ENCODE measurements at regions of chr9 and their contacts with region 1.

Region 1: DNA sequence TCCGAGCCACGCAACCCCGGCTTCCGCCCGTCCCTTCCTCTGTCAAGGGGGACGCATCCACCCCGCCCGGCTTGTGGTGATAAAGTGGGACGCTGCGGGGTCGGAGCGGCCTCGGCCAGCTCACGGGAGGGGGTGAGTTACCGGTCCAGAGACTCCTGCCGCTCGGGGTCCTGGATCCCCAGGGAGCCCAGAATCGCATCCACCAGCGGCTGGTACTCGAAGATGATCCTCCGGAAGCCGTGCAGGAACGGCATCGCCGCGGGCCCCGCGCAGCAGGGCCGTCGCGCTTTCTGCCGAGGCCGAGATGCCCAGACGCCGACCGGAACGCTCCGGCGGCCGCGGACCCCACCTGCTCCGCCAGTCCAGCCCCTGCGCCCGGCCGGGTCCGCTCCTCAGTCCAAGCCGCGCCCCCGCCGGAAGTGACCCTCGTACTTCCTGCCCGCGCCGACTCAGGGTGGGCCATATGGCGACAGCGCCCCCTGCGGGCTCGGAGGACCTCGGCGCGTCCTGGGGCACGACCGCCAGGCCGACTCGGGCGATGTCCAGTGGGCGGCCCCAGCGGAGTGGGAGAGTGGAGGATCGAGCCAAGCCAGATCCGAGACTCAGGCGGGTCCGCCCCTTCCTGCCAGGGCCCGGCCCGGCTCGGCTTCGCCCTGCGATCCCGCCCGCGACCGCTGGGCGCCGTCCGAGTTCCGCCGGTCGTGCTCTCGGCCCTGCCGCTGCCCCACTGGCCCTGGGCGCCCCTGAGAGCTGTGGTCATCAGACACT is at the start of gene ASB6:
- DNase-seq: peak; percentile 78 to 94 (median 89)
- ATAC-seq: peak; percentile 71
- H3K4me3 ChIP-seq: peak within 1 kb of the TSS; percentile 98
- H3K4me3 Mint-ChIP-seq: peak within 1 kb of the TSS; percentile 87
- H3K27ac ChIP-seq: peak within 1 kb of the TSS; percentile 66 to 74
- H3K27ac Mint-ChIP-seq: peak within 1 kb of the TSS; percentile 85
- H3K4me1 ChIP-seq: peaks cover 35% of the 10 kb centered on the region
- H3K4me1 Mint-ChIP-seq: peaks cover 11% of the 10 kb centered on the region
- H3K27me3 ChIP-seq: no peaks in the 10 kb centered on the region
- H3K27me3 Mint-ChIP-seq: no peaks in the 10 kb centered on the region
- CTCF ChIP-seq: peak; percentile 100
- total RNA-seq, gene ASB6: 28.5 to 29.3 TPM

Region 2: DNA sequence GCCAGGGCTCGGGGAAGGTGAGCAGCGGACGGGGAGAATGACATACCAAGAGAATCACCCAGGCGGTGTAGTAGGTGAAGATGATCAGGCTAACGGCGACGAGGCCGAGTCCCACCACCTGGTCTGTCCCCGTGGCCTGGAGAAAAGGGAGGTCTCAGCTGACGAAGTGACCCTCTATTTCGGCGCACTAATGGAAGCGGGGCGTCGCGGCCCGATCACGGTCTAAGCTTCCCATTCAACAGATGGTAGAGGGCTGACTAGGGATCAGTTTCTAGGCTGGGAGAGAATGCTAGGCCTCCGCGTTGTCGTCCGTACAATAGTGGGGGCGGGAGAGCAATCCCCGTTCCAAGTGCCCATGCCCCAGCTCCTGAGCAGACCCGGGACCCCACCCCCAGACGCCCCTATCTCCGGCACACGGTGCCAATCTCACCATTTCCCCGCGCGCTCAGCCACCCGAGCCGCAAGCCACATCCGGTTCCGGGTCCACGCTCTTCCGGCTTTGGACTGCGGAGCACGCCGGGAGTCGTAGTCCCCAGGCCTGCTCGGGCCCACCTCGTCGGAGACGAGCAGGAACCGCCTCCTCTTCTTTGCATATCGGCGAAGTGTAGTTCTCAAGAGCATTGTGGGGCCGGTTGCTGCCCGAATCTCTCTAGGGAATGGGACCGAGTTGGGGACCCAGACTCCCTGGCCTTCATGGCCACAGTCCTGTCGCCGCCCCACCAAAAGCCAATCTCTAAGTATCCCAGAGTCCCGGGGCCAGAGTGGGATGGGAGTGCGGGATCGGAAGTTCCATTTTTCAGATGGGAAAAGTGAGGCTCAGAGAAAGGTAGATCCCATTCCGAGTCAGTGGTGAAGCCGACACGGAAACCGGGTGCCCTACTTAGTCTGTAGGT is 1704.3 kb before region 1 on chr9 and contains the start of gene DPM2:
- CTCF ChIA-PET with region 1: no interaction called
- POLR2A ChIA-PET with region 1: no interaction called
- intact Hi-C with region 1: loop called in 1 of 2 experiments (anchors 10 kb)
- DNase-seq: peak; percentile 74 to 94 (median 84)
- ATAC-seq: peak; percentile 85
- H3K4me3 ChIP-seq: peak within 1 kb of the TSS; percentile 90
- H3K4me3 Mint-ChIP-seq: peak within 1 kb of the TSS; percentile 93
- H3K27ac ChIP-seq: peak within 1 kb of the TSS; percentile 48 to 80
- H3K27ac Mint-ChIP-seq: peak within 1 kb of the TSS; percentile 88
- H3K4me1 ChIP-seq: peaks cover 47% of the 10 kb centered on the region
- H3K4me1 Mint-ChIP-seq: peaks cover 63% of the 10 kb centered on the region
- H3K27me3 ChIP-seq: no peaks in the 10 kb centered on the region
- H3K27me3 Mint-ChIP-seq: no peaks in the 10 kb centered on the region
- CTCF ChIP-seq: no peak
- total RNA-seq, gene DPM2: 41.7 to 47.6 TPM

Region 3: GRCh38 chr9:129597355-129598088 is 44.4 kb before region 1 on chr9:
- CTCF ChIA-PET with region 1: no interaction called
- POLR2A ChIA-PET with region 1: no interaction called
- intact Hi-C with region 1: no loop called
- DNase-seq: peak in 5 of 14 experiments; percentile 32 to 80 (median 67)
- ATAC-seq: peak; percentile 66
- H3K4me3 ChIP-seq: peak overlapping the region; percentile 40
- H3K4me3 Mint-ChIP-seq: peak overlapping the region; percentile 69
- H3K27ac ChIP-seq: no peak overlapping the region
- H3K27ac Mint-ChIP-seq: peak overlapping the region; percentile 33
- H3K4me1 ChIP-seq: peaks cover 30% of the 10 kb centered on the region
- H3K4me1 Mint-ChIP-seq: peaks cover 16% of the 10 kb centered on the region
- H3K27me3 ChIP-seq: peaks cover 0 to 3% of the 10 kb centered on the region in 2 experiments
- H3K27me3 Mint-ChIP-seq: peaks cover 6% of the 10 kb centered on the region
- CTCF ChIP-seq: no peak

Region 4: DNA sequence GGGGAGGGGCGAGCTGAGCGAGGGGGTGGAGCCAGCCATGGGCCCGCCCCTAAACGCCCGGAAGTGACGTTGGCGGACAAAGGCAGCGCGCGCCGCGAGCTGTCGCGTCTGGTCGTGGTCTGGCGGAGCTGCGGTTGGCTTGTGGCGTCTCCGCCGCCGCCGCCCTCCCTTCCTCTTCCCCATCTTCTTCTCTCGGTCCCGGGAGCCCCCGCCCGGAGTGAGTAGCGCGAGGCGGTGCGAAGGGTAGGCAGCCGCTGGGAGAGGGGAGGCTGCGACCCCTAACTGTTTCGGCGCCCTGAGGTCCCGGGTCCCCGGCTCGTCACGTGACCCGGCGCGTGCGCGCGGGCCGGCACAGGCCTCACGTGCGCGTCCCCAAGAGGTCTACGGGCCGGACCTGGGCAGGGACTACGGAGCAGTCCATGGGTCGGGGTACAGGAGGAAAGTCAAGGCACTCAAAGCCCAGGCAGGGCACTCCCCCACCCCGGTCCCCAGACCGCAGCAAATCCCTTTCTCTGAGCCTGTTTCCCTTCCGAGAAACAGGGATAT is 15.8 kb before region 1 on chr9 and contains the start of gene NTMT1:
- CTCF ChIA-PET with region 1: interaction called, 15 read pairs
- POLR2A ChIA-PET with region 1: interaction called, 40 read pairs
- intact Hi-C with region 1: loop called (anchors 1 kb)
- DNase-seq: peak; percentile 85 to 97 (median 90)
- ATAC-seq: peak; percentile 65
- H3K4me3 ChIP-seq: peak within 1 kb of the TSS; percentile 75
- H3K4me3 Mint-ChIP-seq: peak within 1 kb of the TSS; percentile 94
- H3K27ac ChIP-seq: peak within 1 kb of the TSS; percentile 77 to 98
- H3K27ac Mint-ChIP-seq: peak within 1 kb of the TSS; percentile 94
- H3K4me1 ChIP-seq: peaks cover 70% of the 10 kb centered on the region
- H3K4me1 Mint-ChIP-seq: peaks cover 63% of the 10 kb centered on the region
- H3K27me3 ChIP-seq: peaks cover 6 to 10% of the 10 kb centered on the region in 2 experiments
- H3K27me3 Mint-ChIP-seq: peaks cover 13% of the 10 kb centered on the region
- CTCF ChIP-seq: no peak
- total RNA-seq, gene NTMT1: 50.7 to 52.5 TPM

Region 5: GRCh38 chr9:129783516-129784361 is 141.8 kb after region 1 on chr9:
- CTCF ChIA-PET with region 1: no interaction called
- POLR2A ChIA-PET with region 1: no interaction called
- intact Hi-C with region 1: loop called in 1 of 2 experiments (anchors 1 kb)
- DNase-seq: peak; percentile 55 to 84 (median 68)
- ATAC-seq: peak; percentile 100
- H3K4me3 ChIP-seq: no peak overlapping the region
- H3K4me3 Mint-ChIP-seq: no peak overlapping the region
- H3K27ac ChIP-seq: no peak overlapping the region
- H3K27ac Mint-ChIP-seq: no peak overlapping the region
- H3K4me1 ChIP-seq: peaks cover 5% of the 10 kb centered on the region
- H3K4me1 Mint-ChIP-seq: peaks cover 5% of the 10 kb centered on the region
- H3K27me3 ChIP-seq: peaks cover 0 to 2% of the 10 kb centered on the region in 2 experiments
- H3K27me3 Mint-ChIP-seq: peaks cover 8% of the 10 kb centered on the region
- CTCF ChIP-seq: peak; percentile 89

Region 6: DNA sequence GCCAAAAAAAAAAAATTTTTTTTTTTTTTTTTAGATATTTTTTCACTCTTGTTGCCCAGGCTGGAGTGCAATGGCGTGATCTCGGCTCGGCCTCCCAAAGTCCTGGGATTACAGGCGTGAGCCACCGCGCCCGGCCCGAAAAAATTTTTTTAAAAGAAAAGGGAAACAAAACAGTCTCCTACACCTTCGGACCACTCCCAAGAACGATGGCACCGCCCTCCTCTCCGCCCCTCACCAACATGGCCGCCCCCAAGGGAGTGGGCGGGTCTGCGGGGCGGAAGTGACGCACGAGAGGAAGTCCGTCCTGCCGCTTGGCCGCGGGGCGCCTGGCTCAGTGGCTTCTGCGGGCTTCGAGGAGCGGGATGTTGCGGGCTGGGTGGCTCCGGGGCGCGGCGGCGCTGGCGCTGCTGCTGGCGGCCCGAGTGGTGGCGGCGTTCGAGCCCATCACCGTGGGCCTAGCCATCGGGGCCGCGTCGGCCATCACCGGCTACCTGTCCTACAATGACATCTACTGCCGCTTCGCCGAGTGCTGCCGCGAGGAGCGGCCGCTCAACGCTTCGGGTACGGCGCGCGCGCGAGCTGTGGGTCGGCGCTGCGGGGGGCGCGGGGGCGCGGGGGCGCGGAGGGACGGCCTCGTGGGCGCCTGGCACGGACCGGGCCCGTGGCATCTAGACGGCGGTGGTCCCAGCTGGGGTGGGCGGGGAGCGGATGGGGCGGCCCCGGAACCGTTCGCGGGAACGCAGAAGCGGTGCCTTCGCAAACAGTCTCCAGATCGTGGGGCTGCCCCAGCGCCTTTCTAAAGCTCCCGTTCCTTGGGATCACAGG is 161.1 kb after region 1 on chr9 and contains the start of gene TOR1B:
- CTCF ChIA-PET with region 1: no interaction called
- POLR2A ChIA-PET with region 1: no interaction called
- intact Hi-C with region 1: loop called in 1 of 2 experiments (anchors 5 kb)
- DNase-seq: peak; percentile 87 to 97 (median 94)
- ATAC-seq: peak; percentile 92
- H3K4me3 ChIP-seq: peak within 1 kb of the TSS; percentile 81
- H3K4me3 Mint-ChIP-seq: peak within 1 kb of the TSS; percentile 91
- H3K27ac ChIP-seq: peak within 1 kb of the TSS; percentile 49 to 77
- H3K27ac Mint-ChIP-seq: peak within 1 kb of the TSS; percentile 86
- H3K4me1 ChIP-seq: peaks cover 25% of the 10 kb centered on the region
- H3K4me1 Mint-ChIP-seq: peaks cover 24% of the 10 kb centered on the region
- H3K27me3 ChIP-seq: no peaks in the 10 kb centered on the region
- H3K27me3 Mint-ChIP-seq: no peaks in the 10 kb centered on the region
- CTCF ChIP-seq: no peak
- total RNA-seq, gene TOR1B: 13.4 to 15.1 TPM